AG04450 (cell line): ENCODE measurements at regions of chr19 and their contacts with region 1.

Region 1: GRCh38 chr19:16814526-16815100 is 14.6 kb upstream of the SIN3B start:
- DNase-seq: no peak
- H3K4me3 ChIP-seq: no peak overlapping the region
- H3K27ac ChIP-seq: no peak overlapping the region
- H3K27me3 ChIP-seq: peaks cover 2% of the 10 kb centered on the region
- CTCF ChIP-seq: no peak

Region 2: GRCh38 chr19:16788311-16788865 is 26.2 kb before region 1 on chr19:
- CTCF ChIA-PET with region 1: no interaction called
- POLR2A ChIA-PET with region 1: no interaction called
- DNase-seq: no peak
- H3K4me3 ChIP-seq: no peak overlapping the region
- H3K27ac ChIP-seq: no peak overlapping the region
- H3K27me3 ChIP-seq: no peaks in the 10 kb centered on the region
- CTCF ChIP-seq: no peak

Region 3: GRCh38 chr19:16801596-16801995 is 13.0 kb before region 1 on chr19:
- CTCF ChIA-PET with region 1: interaction called, 11 read pairs
- POLR2A ChIA-PET with region 1: no interaction called
- DNase-seq: no peak
- H3K4me3 ChIP-seq: no peak overlapping the region
- H3K27ac ChIP-seq: no peak overlapping the region
- H3K27me3 ChIP-seq: no peaks in the 10 kb centered on the region
- CTCF ChIP-seq: no peak